ENCODE measurements at regions of chr1 and their contacts with region 1.

Region 1: GRCh38 chr1:1399187-1399871 is at the start of gene CCNL2:
- DNase-seq: peak; percentile 99 to 100
- ATAC-seq: peak; percentile 94 to 97 (median 95)
- H3K4me3 ChIP-seq: peak within 1 kb of the TSS; percentile 97
- H3K27ac ChIP-seq: peak within 1 kb of the TSS; percentile 95
- H3K4me1 ChIP-seq: peaks cover 46% of the 10 kb centered on the region
- H3K27me3 ChIP-seq: no peaks in the 10 kb centered on the region
- CTCF ChIP-seq: peak; percentile 62
- total RNA-seq, gene CCNL2: 40.2 to 71.8 (median 46.1) TPM

Region 2: GRCh38 chr1:1374929-1375662 is 24.2 kb before region 1 on chr1 and contains the start of gene AURKAIP1:
- intact Hi-C with region 1: loop called in 1 of 2 experiments (anchors 2 kb)
- DNase-seq: peak; percentile 97 to 99
- ATAC-seq: peak; percentile 93 to 95 (median 94)
- H3K4me3 ChIP-seq: peak within 1 kb of the TSS; percentile 87
- H3K27ac ChIP-seq: peak within 1 kb of the TSS; percentile 90
- H3K4me1 ChIP-seq: peaks cover 32% of the 10 kb centered on the region
- H3K27me3 ChIP-seq: no peaks in the 10 kb centered on the region
- CTCF ChIP-seq: peak; percentile 29
- total RNA-seq, gene AURKAIP1: 180 to 194 (median 183) TPM

Measured in psoas muscle (tissue), 8 donors.